Dendritic cell treated with granulocyte-macrophage colony-stimulating factor and Interleukin-4, amounts not matched to agents 40 ng/mL and 50 ng/mL, for 4 days (primary cell): ENCODE measurements at regions of chr10 and their contacts with region 1.

Region 1: GRCh38 chr10:102729029-102730026 is 14.4 kb upstream of the WBP1L start:
- H3K4me3 Mint-ChIP-seq: no peak overlapping the region
- H3K27ac Mint-ChIP-seq: peak overlapping the region; percentile 3
- H3K4me1 Mint-ChIP-seq: peaks cover 29% of the 10 kb centered on the region
- H3K27me3 Mint-ChIP-seq: no peaks in the 10 kb centered on the region

Region 2: DNA sequence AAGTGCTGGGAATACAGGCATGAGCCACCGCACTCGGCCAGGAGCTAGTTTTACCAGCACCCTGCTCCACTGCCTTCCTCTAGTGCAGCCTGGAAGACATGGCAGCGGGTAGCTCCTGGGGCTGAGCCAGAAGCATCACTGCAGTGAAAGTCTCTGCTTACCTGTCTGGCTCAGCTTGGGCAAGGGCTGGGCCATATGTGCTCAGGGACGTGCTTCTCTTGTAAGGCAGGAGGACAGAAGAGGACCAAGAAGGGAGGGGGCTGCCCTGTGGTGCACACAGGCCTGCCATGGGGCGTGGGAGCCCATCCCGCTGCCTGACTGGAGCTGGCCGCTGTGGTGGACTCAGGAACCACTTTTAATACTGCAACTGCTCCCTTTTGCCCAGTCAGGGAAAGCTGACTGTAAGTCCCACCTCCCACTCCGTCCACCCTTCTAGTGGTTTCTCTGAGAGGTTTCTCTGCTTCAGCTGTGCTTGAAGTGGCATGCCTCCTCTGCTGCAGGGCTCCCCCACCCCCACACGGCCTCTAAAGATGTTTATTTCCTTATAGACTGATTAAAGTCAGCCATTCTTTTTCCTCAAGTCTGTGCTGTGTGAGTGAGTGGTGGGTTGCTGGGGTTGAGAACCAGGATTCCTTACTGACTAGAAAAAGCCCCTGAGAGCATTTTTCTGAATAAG is 252.7 kb before region 1 on chr10:
- intact Hi-C with region 1: no loop called
- H3K4me3 Mint-ChIP-seq: no peak overlapping the region
- H3K27ac Mint-ChIP-seq: no peak overlapping the region
- H3K4me1 Mint-ChIP-seq: peaks cover 10% of the 10 kb centered on the region
- H3K27me3 Mint-ChIP-seq: no peaks in the 10 kb centered on the region

Region 3: DNA sequence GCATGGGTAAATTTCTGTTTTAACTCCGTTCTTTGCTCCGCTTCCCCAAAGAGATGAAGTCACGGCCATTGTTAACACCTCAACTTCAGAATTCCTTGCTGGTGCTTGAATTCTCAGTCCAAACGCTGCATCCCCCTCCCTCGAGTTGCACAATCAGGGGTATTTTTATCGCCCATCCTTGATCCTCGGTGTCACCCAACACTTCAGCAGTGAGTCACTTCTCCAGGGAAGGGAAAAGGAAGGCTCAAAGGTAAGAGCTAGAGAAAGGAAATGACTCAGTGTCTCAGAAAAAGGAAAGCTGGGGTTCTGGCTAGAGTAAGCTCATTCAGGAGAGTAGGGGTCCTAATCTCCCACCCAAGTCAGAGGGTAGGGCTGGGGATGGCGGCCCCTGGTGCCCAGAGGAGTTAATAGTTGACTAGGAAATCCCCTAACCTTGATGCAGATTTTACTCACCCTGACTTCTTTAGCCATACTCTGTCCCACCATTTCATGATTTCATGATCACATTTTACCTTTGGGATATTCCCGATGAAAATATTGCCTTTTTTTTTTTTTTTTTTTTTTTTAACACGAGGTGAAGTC is 124.9 kb before region 1 on chr10:
- intact Hi-C with region 1: no loop called
- H3K4me3 Mint-ChIP-seq: no peak overlapping the region
- H3K27ac Mint-ChIP-seq: peak overlapping the region; percentile 23
- H3K4me1 Mint-ChIP-seq: peaks cover 20% of the 10 kb centered on the region
- H3K27me3 Mint-ChIP-seq: no peaks in the 10 kb centered on the region

Region 4: GRCh38 chr10:102904346-102904745 is 175.0 kb after region 1 on chr10:
- intact Hi-C with region 1: loop called (anchors 1 kb)
- H3K4me3 Mint-ChIP-seq: no peak overlapping the region
- H3K27ac Mint-ChIP-seq: no peak overlapping the region
- H3K4me1 Mint-ChIP-seq: no peaks in the 10 kb centered on the region
- H3K27me3 Mint-ChIP-seq: no peaks in the 10 kb centered on the region

Region 5: DNA sequence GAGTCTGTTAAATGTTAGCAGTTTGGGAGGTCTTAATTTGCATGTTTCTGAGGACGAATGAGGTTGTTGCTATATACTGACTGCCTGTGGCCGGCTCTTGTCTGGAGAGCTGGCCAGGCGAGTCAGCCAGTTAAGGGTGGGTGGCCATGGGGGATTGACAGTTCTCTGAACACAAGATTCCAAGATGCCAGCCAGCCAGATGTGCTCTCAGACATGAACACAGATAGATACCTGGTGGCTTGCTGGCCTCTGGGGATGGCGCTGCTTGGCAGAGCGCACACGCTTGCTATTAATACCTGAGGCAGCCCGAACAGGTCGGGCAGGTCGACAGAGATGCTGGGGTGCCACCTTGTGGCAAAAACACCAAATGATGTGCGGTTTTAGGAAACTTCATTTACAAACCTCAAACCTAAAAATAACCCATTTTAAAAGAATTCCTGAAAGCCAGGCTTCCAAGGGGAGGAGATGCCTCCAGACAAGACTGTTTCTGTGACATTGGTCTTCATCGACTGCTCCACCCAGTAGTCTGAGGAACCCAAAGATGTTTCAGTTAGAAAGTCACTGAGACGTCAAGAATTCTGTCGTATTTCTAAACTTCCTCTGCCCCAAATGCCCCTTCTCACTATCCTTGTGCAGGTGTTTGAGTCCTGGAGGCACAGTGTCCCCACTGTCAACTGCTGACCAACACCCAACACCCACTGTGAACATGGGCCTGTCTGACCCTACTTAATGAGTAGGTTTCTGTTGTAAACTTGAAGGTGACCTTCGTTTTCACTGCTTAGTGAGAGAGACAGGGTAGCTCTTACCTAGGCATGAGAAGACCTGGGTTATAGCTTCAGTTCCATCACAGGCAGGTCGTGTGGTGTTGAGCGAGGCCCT is 340.4 kb after region 1 on chr10:
- intact Hi-C with region 1: loop called (anchors 10 kb)
- H3K4me3 Mint-ChIP-seq: no peak overlapping the region
- H3K27ac Mint-ChIP-seq: peak overlapping the region; percentile 10
- H3K4me1 Mint-ChIP-seq: peaks cover 27% of the 10 kb centered on the region
- H3K27me3 Mint-ChIP-seq: no peaks in the 10 kb centered on the region

Region 6: GRCh38 chr10:103333925-103334520 is 604.7 kb after region 1 on chr10:
- intact Hi-C with region 1: loop called (anchors 10 kb)
- H3K4me3 Mint-ChIP-seq: no peak overlapping the region
- H3K27ac Mint-ChIP-seq: no peak overlapping the region
- H3K4me1 Mint-ChIP-seq: no peaks in the 10 kb centered on the region
- H3K27me3 Mint-ChIP-seq: no peaks in the 10 kb centered on the region